Activated CD8-positive, alpha-beta T cell treated with anti-CD3 and anti-CD28 coated beads for 36 hours (primary cell): ENCODE measurements at regions of chr5 and their contacts with region 1.

Region 1: DNA sequence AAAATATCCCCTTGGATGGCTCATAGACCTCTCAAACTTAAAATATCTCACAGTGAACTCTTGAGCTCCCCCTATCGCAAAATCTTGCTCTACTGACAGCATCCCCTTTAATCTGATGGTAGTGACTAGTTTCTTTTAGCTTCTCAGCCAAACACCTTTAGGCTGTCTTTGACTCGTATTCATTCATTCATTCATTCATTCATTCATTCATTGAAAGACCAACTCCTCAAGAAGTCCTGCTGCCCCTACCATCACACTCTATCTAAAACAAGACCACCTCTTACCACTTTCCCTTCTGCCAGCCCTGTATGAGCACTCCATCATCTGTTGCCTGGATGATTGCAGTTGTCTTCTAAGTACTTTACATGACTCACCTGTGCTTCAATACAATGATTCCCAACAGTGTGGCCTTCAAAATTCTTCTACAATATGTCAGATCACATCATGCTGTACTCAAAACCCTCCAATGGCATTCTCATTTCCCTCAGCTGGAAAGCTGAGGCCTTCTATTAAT is 46.8 kb downstream of the ITGA2 start:
- DNase-seq: peak; percentile 20
- ATAC-seq: no peak
- H3K4me3 Mint-ChIP-seq: no peak overlapping the region
- H3K27ac Mint-ChIP-seq: no peak overlapping the region
- H3K4me1 Mint-ChIP-seq: peaks cover 40% of the 10 kb centered on the region
- H3K27me3 Mint-ChIP-seq: no peaks in the 10 kb centered on the region
- CTCF ChIP-seq: peak; percentile 70

Region 2: GRCh38 chr5:52989781-52990527 is 46.0 kb before region 1 on chr5:
- CTCF ChIA-PET with region 1: interaction called, 3 read pairs
- POLR2A ChIA-PET with region 1: interaction called, 3 read pairs
- intact Hi-C with region 1: loop called (anchors 5 kb)
- DNase-seq: peak; percentile 56
- ATAC-seq: peak; percentile 50
- H3K4me3 Mint-ChIP-seq: peak overlapping the region; percentile 65
- H3K27ac Mint-ChIP-seq: no peak overlapping the region
- H3K4me1 Mint-ChIP-seq: peaks cover 18% of the 10 kb centered on the region
- H3K27me3 Mint-ChIP-seq: peaks cover 50% of the 10 kb centered on the region
- CTCF ChIP-seq: no peak